CD8-positive, alpha-beta T cell (primary cell): ENCODE measurements at regions of chr1 and their contacts with region 1.

Region 1: DNA sequence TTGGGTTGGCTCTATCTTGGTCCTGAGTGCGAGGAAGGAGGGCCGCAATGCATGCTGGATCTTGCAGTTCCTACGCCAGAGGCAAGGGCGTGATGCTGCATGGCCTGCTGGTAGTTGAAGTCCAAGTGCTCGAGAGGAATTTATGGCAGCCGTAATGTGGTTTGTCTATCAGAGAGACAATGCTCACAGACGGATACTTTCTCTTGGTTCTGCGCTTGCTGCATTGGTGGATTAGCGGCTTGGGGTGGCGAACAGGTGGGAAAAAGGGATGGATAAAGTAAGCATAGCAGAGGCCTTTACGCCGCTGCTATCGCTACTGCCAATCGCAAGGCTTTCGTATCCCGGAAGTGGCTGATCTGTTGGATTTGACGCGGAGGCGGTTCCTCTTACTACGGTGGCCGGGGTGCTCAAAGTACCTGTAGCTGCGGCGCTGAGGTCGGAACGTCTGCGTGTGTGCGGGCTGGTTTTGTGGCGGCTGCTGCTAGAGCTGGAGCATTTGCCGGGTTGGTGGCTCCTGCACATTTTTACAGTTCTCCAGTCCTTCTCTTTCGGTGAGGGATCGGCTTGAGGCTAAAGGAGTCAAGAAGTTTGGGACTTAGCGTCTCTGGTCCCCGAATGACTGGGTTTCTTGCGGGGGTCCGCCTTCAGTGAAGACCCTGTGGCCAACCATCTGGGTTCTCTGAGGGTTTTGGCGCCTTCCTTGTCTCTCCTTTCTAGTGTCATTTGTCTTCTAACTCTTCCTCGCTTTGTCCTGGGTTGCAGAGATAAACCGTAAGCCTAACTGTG is at the start of gene ATG4C:
- DNase-seq: peak; percentile 82 to 97 (median 91)
- ATAC-seq: peak; percentile 95
- H3K4me3 ChIP-seq: peak within 1 kb of the TSS; percentile 82 to 97
- H3K4me3 Mint-ChIP-seq: no peak within 1 kb of the TSS
- H3K27ac ChIP-seq: peak within 1 kb of the TSS; percentile 90 to 96
- H3K27ac Mint-ChIP-seq: no peak within 1 kb of the TSS
- H3K4me1 ChIP-seq: peaks cover 11% of the 10 kb centered on the region
- H3K4me1 Mint-ChIP-seq: peaks cover 16% of the 10 kb centered on the region
- H3K27me3 ChIP-seq: peaks cover 0 to 2% of the 10 kb centered on the region in 2 experiments
- H3K27me3 Mint-ChIP-seq: peaks cover 10% of the 10 kb centered on the region
- CTCF ChIP-seq: no peak
- total RNA-seq, gene ATG4C: 2.7 to 6.3 TPM

Region 2: DNA sequence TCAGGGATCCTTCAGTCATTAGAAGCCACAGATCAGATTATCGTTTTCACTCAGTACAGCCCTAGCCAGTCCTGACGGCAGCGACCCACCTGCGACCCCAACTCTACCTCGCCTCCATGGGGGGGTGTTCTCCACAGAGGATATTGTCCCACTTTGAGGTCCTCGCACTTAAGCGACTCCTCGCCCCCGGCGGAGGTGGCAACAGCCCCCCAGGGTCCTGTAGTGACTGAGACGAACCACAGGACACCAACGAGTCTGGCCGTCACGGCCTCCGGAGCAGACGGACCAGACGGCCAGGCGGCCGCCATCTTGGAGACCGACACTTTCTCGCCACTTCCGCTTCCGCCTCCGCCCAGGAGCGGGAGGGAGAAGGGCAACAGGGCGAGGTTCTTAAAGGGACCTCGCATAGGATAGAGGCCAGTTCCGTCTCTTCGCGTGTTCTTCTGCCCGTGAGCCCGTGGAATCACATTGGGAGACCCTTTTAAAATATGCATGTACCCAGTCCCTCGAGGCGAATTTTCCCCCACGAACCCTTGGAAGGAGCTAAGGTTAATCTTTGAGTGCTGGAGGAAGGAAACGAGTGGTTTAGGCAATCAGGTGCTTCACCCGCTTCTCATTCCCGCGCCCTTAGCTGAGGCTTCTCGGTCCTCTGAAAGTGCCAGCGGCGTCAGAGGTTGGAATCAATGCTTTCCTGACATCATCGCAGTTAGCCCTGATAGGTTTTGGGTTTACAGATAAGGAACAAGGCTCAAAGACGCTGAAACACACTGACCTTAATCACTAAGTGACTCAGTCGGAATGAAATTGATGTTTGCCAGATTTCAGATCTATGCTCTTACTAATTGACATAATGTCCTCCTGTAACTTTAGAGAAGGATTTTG is 1058.9 kb before region 1 on chr1 and contains the start of gene TM2D1:
- CTCF ChIA-PET with region 1: no interaction called
- POLR2A ChIA-PET with region 1: no interaction called
- intact Hi-C with region 1: loop called (anchors 5 to 10 kb)
- DNase-seq: peak; percentile 66 to 92 (median 84)
- ATAC-seq: peak; percentile 91
- H3K4me3 ChIP-seq: peak within 1 kb of the TSS; percentile 85 to 93
- H3K4me3 Mint-ChIP-seq: peak within 1 kb of the TSS; percentile 96
- H3K27ac ChIP-seq: peak within 1 kb of the TSS; percentile 85 to 89
- H3K27ac Mint-ChIP-seq: peak within 1 kb of the TSS; percentile 96
- H3K4me1 ChIP-seq: peaks cover 21% of the 10 kb centered on the region
- H3K4me1 Mint-ChIP-seq: peaks cover 34% of the 10 kb centered on the region
- H3K27me3 ChIP-seq: no peaks in the 10 kb centered on the region
- H3K27me3 Mint-ChIP-seq: no peaks in the 10 kb centered on the region
- CTCF ChIP-seq: no peak
- total RNA-seq, gene TM2D1: 12.7 to 14.8 TPM

Region 3: DNA sequence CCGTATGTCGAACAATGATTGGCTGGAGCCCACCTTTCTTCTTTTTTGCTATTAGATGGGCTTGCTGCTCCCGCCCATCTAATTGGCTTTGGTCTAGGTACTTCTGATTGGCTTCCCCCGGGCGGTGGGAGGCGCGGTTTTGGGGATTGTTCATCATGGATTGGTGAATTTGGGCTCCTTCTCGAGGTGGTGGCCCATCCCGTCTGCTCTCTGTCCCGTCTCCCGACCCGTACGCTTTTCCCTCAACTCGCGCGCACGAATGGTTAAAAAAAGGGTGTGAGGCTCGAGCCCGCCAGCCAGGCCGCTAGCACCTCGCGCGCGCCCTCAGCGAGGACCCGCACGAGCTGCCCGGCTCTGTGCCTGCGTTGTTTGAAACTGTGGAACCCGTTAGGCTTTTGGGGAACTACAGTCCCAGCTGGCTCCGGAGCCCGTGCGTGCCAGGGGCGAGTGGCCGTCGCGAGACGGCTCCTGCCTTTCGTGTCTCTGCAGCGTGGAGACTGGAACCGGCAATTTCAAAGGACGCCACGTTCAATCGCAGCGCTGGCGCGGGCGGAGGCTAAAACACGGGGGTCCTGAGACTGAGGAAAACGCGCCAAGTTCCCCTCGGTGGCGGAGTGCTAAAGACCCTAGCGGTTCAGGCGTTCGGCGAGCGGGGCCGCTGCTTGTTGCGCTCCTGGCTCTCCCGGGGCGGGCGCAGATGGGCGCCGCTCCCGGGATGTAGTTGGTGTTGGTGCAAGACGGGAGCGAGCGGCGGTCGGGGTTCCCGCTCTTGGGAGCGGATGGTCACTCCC is 347.3 kb before region 1 on chr1 and contains the start of gene USP1:
- CTCF ChIA-PET with region 1: no interaction called
- POLR2A ChIA-PET with region 1: interaction called, 8 read pairs
- intact Hi-C with region 1: loop called (anchors 1 kb)
- DNase-seq: peak; percentile 94 to 100 (median 96)
- ATAC-seq: peak; percentile 82
- H3K4me3 ChIP-seq: peak within 1 kb of the TSS; percentile 90 to 97
- H3K4me3 Mint-ChIP-seq: peak within 1 kb of the TSS; percentile 98
- H3K27ac ChIP-seq: peak within 1 kb of the TSS; percentile 96 to 98
- H3K27ac Mint-ChIP-seq: peak within 1 kb of the TSS; percentile 100
- H3K4me1 ChIP-seq: peaks cover 33% of the 10 kb centered on the region
- H3K4me1 Mint-ChIP-seq: peaks cover 40% of the 10 kb centered on the region
- H3K27me3 ChIP-seq: no peaks in the 10 kb centered on the region
- H3K27me3 Mint-ChIP-seq: no peaks in the 10 kb centered on the region
- CTCF ChIP-seq: no peak
- total RNA-seq, gene USP1: 23.1 to 23.7 TPM

Region 4: GRCh38 chr1:62599044-62599443 is 184.9 kb before region 1 on chr1:
- CTCF ChIA-PET with region 1: no interaction called
- POLR2A ChIA-PET with region 1: no interaction called
- intact Hi-C with region 1: no loop called
- DNase-seq: no peak
- ATAC-seq: no peak
- H3K4me3 ChIP-seq: no peak overlapping the region
- H3K4me3 Mint-ChIP-seq: no peak overlapping the region
- H3K27ac ChIP-seq: no peak overlapping the region
- H3K27ac Mint-ChIP-seq: no peak overlapping the region
- H3K4me1 ChIP-seq: no peaks in the 10 kb centered on the region
- H3K4me1 Mint-ChIP-seq: no peaks in the 10 kb centered on the region
- H3K27me3 ChIP-seq: no peaks in the 10 kb centered on the region
- H3K27me3 Mint-ChIP-seq: no peaks in the 10 kb centered on the region
- CTCF ChIP-seq: no peak

Region 5: GRCh38 chr1:62687903-62688686 is 95.8 kb before region 1 on chr1 and contains the start of gene DOCK7:
- CTCF ChIA-PET with region 1: no interaction called
- POLR2A ChIA-PET with region 1: no interaction called
- intact Hi-C with region 1: loop called (anchors 5 kb)
- DNase-seq: peak; percentile 11 to 76 (median 50)
- ATAC-seq: peak; percentile 63
- H3K4me3 ChIP-seq: peak within 1 kb of the TSS; percentile 60 to 71
- H3K4me3 Mint-ChIP-seq: peak within 1 kb of the TSS; percentile 98
- H3K27ac ChIP-seq: peak within 1 kb of the TSS; percentile 26 to 36
- H3K27ac Mint-ChIP-seq: peak within 1 kb of the TSS; percentile 94
- H3K4me1 ChIP-seq: no peaks in the 10 kb centered on the region
- H3K4me1 Mint-ChIP-seq: peaks cover 28% of the 10 kb centered on the region
- H3K27me3 ChIP-seq: no peaks in the 10 kb centered on the region
- H3K27me3 Mint-ChIP-seq: peaks cover 6% of the 10 kb centered on the region
- CTCF ChIP-seq: no peak
- total RNA-seq, gene DOCK7: 3.9 to 7.4 TPM

Region 6: GRCh38 chr1:62810420-62811274 is 26.7 kb after region 1 on chr1:
- CTCF ChIA-PET with region 1: no interaction called
- POLR2A ChIA-PET with region 1: no interaction called
- intact Hi-C with region 1: no loop called
- DNase-seq: no peak
- ATAC-seq: no peak
- H3K4me3 ChIP-seq: no peak overlapping the region
- H3K4me3 Mint-ChIP-seq: no peak overlapping the region
- H3K27ac ChIP-seq: no peak overlapping the region
- H3K27ac Mint-ChIP-seq: no peak overlapping the region
- H3K4me1 ChIP-seq: no peaks in the 10 kb centered on the region
- H3K4me1 Mint-ChIP-seq: no peaks in the 10 kb centered on the region
- H3K27me3 ChIP-seq: no peaks in the 10 kb centered on the region
- H3K27me3 Mint-ChIP-seq: no peaks in the 10 kb centered on the region
- CTCF ChIP-seq: no peak

Region 7: DNA sequence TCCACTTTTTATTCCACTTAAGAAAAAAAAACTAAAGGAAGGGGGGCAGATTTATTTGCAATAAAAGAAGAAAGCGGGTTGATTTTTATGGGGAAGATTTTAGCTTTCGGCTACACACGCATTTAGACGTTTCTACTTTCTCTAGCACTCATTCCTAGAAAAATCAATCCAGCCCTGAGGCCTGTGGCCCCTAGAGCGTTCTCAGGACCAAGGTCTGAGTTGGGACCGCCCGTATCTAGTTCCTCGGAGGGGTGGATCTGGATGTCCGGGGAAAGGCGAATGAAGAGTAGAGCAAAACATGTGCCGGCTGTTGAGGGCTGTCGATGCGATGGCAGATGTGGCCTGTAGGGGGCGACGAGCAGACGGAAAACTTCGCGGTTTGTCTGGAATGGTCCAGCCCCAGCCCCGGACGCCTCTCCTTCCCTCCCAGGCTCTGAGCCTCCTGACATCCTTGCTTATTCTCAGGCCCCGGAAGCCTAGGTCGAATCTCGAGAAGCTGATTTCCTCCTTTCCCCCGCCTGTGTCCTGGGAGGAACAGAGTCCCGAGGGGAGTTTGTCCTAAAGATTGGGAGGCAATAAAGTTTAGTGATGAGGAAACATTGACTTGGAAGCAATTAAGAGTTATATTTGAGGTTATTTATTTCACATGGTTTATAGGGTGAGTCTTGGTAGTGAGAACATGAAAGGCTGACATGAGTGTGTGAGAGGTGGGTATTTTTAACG is 543.7 kb after region 1 on chr1:
- CTCF ChIA-PET with region 1: no interaction called
- POLR2A ChIA-PET with region 1: no interaction called
- intact Hi-C with region 1: loop called in 1 of 2 experiments (anchors 10 kb)
- DNase-seq: peak in 2 of 9 experiments; percentile 36 to 51
- ATAC-seq: peak; percentile 15
- H3K4me3 ChIP-seq: no peak overlapping the region
- H3K4me3 Mint-ChIP-seq: no peak overlapping the region
- H3K27ac ChIP-seq: no peak overlapping the region
- H3K27ac Mint-ChIP-seq: no peak overlapping the region
- H3K4me1 ChIP-seq: peaks cover 28% of the 10 kb centered on the region
- H3K4me1 Mint-ChIP-seq: peaks cover 25% of the 10 kb centered on the region
- H3K27me3 ChIP-seq: peaks cover 62 to 81% of the 10 kb centered on the region in 2 experiments
- H3K27me3 Mint-ChIP-seq: peaks cover 70% of the 10 kb centered on the region
- CTCF ChIP-seq: no peak

Region 8: GRCh38 chr1:63522891-63523728 is 739.2 kb after region 1 on chr1 and contains the starts of genes EFCAB7 and ITGB3BP:
- CTCF ChIA-PET with region 1: no interaction called
- POLR2A ChIA-PET with region 1: no interaction called
- intact Hi-C with region 1: loop called (anchors 1 to 2 kb)
- DNase-seq: peak; percentile 65 to 90 (median 81)
- ATAC-seq: peak; percentile 85
- H3K4me3 ChIP-seq: peak within 1 kb of the TSS; percentile 67 to 80
- H3K4me3 Mint-ChIP-seq: peak within 1 kb of the TSS; percentile 97
- H3K27ac ChIP-seq: peak within 1 kb of the TSS; percentile 79 to 90
- H3K27ac Mint-ChIP-seq: peak within 1 kb of the TSS; percentile 95
- H3K4me1 ChIP-seq: peaks cover 25% of the 10 kb centered on the region
- H3K4me1 Mint-ChIP-seq: peaks cover 27% of the 10 kb centered on the region
- H3K27me3 ChIP-seq: no peaks in the 10 kb centered on the region
- H3K27me3 Mint-ChIP-seq: no peaks in the 10 kb centered on the region
- CTCF ChIP-seq: no peak
- total RNA-seq, gene EFCAB7: 6.5 to 8.2 TPM
- total RNA-seq, gene ITGB3BP: 7.9 to 8.6 TPM